Esophagus squamous epithelium (tissue), 5 donors: ENCODE measurements at regions of chr10 and their contacts with region 1.

Region 1: GRCh38 chr10:102917962-102918816 is at the start of gene CNNM2:
- DNase-seq: peak; percentile 100
- H3K4me3 ChIP-seq: peak within 1 kb of the TSS; percentile 76 to 99 (median 83)
- H3K27ac ChIP-seq: peak within 1 kb of the TSS; percentile 70 to 95 (median 90)
- H3K4me1 ChIP-seq: peaks cover 18 to 60% (median 20%) of the 10 kb centered on the region in 3 donors
- H3K27me3 ChIP-seq: peaks cover 0 to 6% (median 0%) of the 10 kb centered on the region in 4 donors
- CTCF ChIP-seq: peak in 2 of 6 experiments; percentile 14 to 52
- POLR2A ChIP-seq: peak in 2 of 4 donors; percentile 13 to 57
- total RNA-seq, gene CNNM2: 2.2 to 3.6 (median 2.6) TPM

Region 2: GRCh38 chr10:103069453-103070331 is 151.5 kb after region 1 on chr10:
- intact Hi-C with region 1: loop called (anchors 5 kb)
- DNase-seq: no peak
- H3K4me3 ChIP-seq: no peak overlapping the region
- H3K27ac ChIP-seq: no peak overlapping the region
- H3K4me1 ChIP-seq: peaks cover 0 to 13% (median 3%) of the 10 kb centered on the region in 3 donors
- H3K27me3 ChIP-seq: no peaks in the 10 kb centered on the region
- CTCF ChIP-seq: peak; percentile 64 to 80 (median 73)
- POLR2A ChIP-seq: no peak